Gastrocnemius medialis (tissue), 4 donors: ENCODE measurements at regions of chr7 and their contacts with region 1.

Region 1: GRCh38 chr7:4641667-4642467 is 40.2 kb upstream of the FOXK1 start:
- DNase-seq: peak; percentile 82 to 91
- ATAC-seq: peak; percentile 93 to 94
- H3K4me3 ChIP-seq: peak overlapping the region; percentile 63 to 90 (median 76)
- H3K27ac ChIP-seq: peak overlapping the region; percentile 79 to 92 (median 85)
- H3K4me1 ChIP-seq: peaks cover 0 to 4% of the 10 kb centered on the region in 2 donors
- H3K27me3 ChIP-seq: no peaks in the 10 kb centered on the region
- CTCF ChIP-seq: peak in 4 of 5 experiments; percentile 28 to 66 (median 60)
- POLR2A ChIP-seq: peak; percentile 55 to 57

Region 2: DNA sequence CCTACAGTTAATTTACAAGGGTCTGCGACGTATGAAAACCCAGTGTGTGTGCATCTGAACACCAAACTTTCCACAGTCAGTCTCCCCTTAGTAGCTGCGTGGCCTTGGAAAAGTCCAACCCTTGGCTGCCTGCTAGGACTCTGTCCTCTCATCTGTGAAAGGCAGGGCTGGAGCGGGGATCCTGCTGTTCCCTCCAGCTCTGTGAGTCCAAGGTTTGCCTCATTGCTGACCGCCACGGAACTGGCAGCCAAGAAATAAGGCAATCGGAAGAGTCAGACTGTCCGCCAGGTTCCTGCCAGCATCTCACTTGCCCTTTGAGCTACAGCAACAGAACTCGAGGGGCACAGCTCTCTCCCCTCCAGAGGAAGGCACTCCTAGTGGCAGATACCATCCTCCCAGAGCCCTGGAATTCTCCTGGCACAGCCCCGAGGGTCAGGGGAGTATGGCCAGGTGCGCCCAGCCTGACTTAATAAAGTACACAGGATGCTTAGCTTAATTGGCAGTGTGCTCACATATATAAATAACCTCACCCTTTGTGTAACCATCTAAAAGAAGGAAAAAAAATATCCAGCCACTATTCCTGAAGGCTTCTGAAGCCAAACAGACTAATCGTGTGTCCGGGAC is 489.8 kb before region 1 on chr7:
- in situ Hi-C with region 1: no loop called
- intact Hi-C with region 1: no loop called
- DNase-seq: peak in 1 of 2 donors; percentile 51
- ATAC-seq: peak; percentile 61 to 64
- H3K4me3 ChIP-seq: no peak overlapping the region
- H3K27ac ChIP-seq: no peak overlapping the region
- H3K4me1 ChIP-seq: peaks cover 4 to 12% of the 10 kb centered on the region in 2 donors
- H3K27me3 ChIP-seq: no peaks in the 10 kb centered on the region
- CTCF ChIP-seq: no peak
- POLR2A ChIP-seq: no peak

Region 3: GRCh38 chr7:4675771-4676367 is 34.0 kb after region 1 on chr7:
- in situ Hi-C with region 1: loop called in 1 of 4 experiments (anchors 5 kb)
- intact Hi-C with region 1: loop called (anchors 1 kb)
- DNase-seq: no peak
- ATAC-seq: no peak
- H3K4me3 ChIP-seq: no peak overlapping the region
- H3K27ac ChIP-seq: no peak overlapping the region
- H3K4me1 ChIP-seq: no peaks in the 10 kb centered on the region
- H3K27me3 ChIP-seq: no peaks in the 10 kb centered on the region
- CTCF ChIP-seq: no peak
- POLR2A ChIP-seq: no peak

Region 4: GRCh38 chr7:4753711-4754432 is 112.0 kb after region 1 on chr7:
- in situ Hi-C with region 1: loop called in 2 of 4 experiments (anchors 25 kb)
- intact Hi-C with region 1: loop called (anchors 1 kb)
- DNase-seq: peak; percentile 65 to 66
- ATAC-seq: peak; percentile 87 to 95
- H3K4me3 ChIP-seq: no peak overlapping the region
- H3K27ac ChIP-seq: no peak overlapping the region
- H3K4me1 ChIP-seq: no peaks in the 10 kb centered on the region
- H3K27me3 ChIP-seq: no peaks in the 10 kb centered on the region
- CTCF ChIP-seq: peak; percentile 82 to 96 (median 95)
- POLR2A ChIP-seq: no peak

Region 5: GRCh38 chr7:4775250-4775847 is 133.5 kb after region 1 on chr7 and contains the start of gene AP5Z1:
- in situ Hi-C with region 1: loop called in 2 of 4 experiments (anchors 25 kb)
- intact Hi-C with region 1: loop called (anchors 1 kb)
- DNase-seq: peak; percentile 95
- ATAC-seq: peak; percentile 92 to 96
- H3K4me3 ChIP-seq: peak within 1 kb of the TSS; percentile 95 to 99 (median 98)
- H3K27ac ChIP-seq: peak within 1 kb of the TSS; percentile 91 to 98 (median 92)
- H3K4me1 ChIP-seq: peaks cover 14 to 22% of the 10 kb centered on the region in 2 donors
- H3K27me3 ChIP-seq: no peaks in the 10 kb centered on the region
- CTCF ChIP-seq: no peak
- POLR2A ChIP-seq: peak; percentile 81 to 89
- total RNA-seq, gene AP5Z1: 10.2 to 18.1 (median 14.6) TPM

Region 6: GRCh38 chr7:4883374-4884144 is 241.7 kb after region 1 on chr7 and contains the start of gene RADIL:
- in situ Hi-C with region 1: no loop called
- intact Hi-C with region 1: loop called (anchors 5 kb)
- DNase-seq: peak; percentile 75 to 88
- ATAC-seq: peak; percentile 72 to 85
- H3K4me3 ChIP-seq: peak within 1 kb of the TSS; percentile 51 to 66 (median 53)
- H3K27ac ChIP-seq: peak within 1 kb of the TSS; percentile 69 to 80 (median 74)
- H3K4me1 ChIP-seq: peaks cover 0 to 4% of the 10 kb centered on the region in 2 donors
- H3K27me3 ChIP-seq: peaks cover 0 to 10% (median 4%) of the 10 kb centered on the region in 3 donors
- CTCF ChIP-seq: peak; percentile 34 to 82 (median 69)
- POLR2A ChIP-seq: peak in 1 of 2 donors; percentile 15
- total RNA-seq, gene RADIL: 2.1 to 12.1 (median 5.0) TPM